CD8-positive, alpha-beta memory T cell (primary cell): ENCODE measurements at regions of chr12 and their contacts with region 1.

Region 1: DNA sequence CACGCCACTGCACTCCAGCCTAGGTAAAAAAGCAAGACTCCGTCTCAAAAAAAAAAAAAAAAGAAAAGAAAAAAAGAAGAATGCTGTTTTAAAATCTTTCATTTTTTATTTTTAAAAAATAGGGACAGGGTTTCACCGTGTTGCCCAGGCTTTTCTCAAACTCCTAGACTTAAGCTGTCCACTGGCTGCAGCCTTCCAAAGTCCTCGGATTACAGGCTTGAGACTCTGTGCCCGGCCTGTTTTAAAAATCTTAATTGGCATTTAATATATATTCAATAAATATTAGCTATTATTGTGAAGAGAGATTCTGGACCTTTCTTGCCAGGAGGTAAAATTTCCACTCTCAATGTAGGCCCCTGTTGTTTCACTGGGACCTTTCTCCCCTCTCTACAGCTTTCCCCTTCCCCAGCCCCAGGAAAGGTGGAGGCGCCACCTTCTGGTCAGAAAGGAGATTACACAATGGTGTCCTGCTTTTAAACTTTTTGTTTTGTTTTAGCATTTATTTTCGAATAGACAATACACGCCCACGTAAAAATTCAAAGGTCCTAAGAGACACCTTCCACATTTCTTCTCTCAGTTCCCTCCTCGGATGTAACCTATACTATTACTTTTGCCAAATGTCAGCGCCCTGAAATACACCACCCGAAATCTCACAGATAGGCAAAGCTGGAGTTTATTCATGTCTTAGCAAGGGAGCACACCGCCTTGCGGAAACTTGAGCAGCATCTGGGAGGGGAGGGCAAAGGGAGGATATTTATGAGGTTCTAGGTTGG is 23.8 kb upstream of the PHC1 start:
- DNase-seq: peak; percentile 31 to 68 (median 50)
- H3K4me3 ChIP-seq: peak overlapping the region; percentile 69
- H3K4me3 Mint-ChIP-seq: peak overlapping the region; percentile 84 to 97 (median 93)
- H3K27ac ChIP-seq: no peak overlapping the region
- H3K27ac Mint-ChIP-seq: peak overlapping the region in 7 of 8 donors; percentile 57 to 94 (median 86)
- H3K4me1 ChIP-seq: no peaks in the 10 kb centered on the region
- H3K4me1 Mint-ChIP-seq: peaks cover 4 to 7% (median 6%) of the 10 kb centered on the region in 3 donors
- H3K27me3 ChIP-seq: no peaks in the 10 kb centered on the region
- H3K27me3 Mint-ChIP-seq: peaks cover 1 to 6% of the 10 kb centered on the region in 2 donors

Region 2: GRCh38 chr12:7970475-7971252 is 919.8 kb before region 1 on chr12:
- CTCF ChIA-PET with region 1: no interaction called
- POLR2A ChIA-PET with region 1: no interaction called
- DNase-seq: peak; percentile 73 to 89 (median 82)
- H3K4me3 ChIP-seq: peak overlapping the region; percentile 78
- H3K4me3 Mint-ChIP-seq: peak overlapping the region; percentile 83 to 94 (median 85)
- H3K27ac ChIP-seq: peak overlapping the region; percentile 90
- H3K27ac Mint-ChIP-seq: peak overlapping the region; percentile 92 to 100 (median 96)
- H3K4me1 ChIP-seq: peaks cover 19% of the 10 kb centered on the region
- H3K4me1 Mint-ChIP-seq: peaks cover 18 to 33% (median 28%) of the 10 kb centered on the region in 3 donors
- H3K27me3 ChIP-seq: no peaks in the 10 kb centered on the region
- H3K27me3 Mint-ChIP-seq: peaks cover 0 to 5% of the 10 kb centered on the region in 2 donors

Region 3: DNA sequence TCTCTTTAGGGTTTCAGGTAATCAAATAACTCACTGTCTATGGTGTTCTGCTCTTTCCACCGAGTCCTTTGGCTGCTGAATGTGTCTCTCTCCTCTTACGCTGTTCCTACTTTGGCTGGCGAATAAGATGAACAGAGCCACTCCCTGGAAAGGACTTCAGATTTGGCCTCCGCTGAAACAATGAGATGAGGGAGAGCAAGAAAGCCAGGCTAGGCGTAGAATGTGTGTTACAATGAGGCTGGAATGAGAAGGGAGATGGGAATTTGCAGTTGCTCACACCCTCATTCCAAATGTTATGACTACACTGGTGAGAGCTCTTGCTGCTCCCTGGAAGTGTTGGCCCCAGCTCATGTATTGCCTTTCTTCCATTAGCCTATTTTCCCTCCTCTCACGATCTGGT is 227.9 kb before region 1 on chr12 and contains the start of gene MFAP5:
- CTCF ChIA-PET with region 1: interaction called, 12 read pairs
- POLR2A ChIA-PET with region 1: no interaction called
- DNase-seq: no peak
- H3K4me3 ChIP-seq: no peak within 1 kb of the TSS
- H3K4me3 Mint-ChIP-seq: no peak within 1 kb of the TSS
- H3K27ac ChIP-seq: no peak within 1 kb of the TSS
- H3K27ac Mint-ChIP-seq: no peak within 1 kb of the TSS
- H3K4me1 ChIP-seq: no peaks in the 10 kb centered on the region
- H3K4me1 Mint-ChIP-seq: no peaks in the 10 kb centered on the region
- H3K27me3 ChIP-seq: no peaks in the 10 kb centered on the region
- H3K27me3 Mint-ChIP-seq: peaks cover 8 to 10% of the 10 kb centered on the region in 2 donors
- total RNA-seq, gene MFAP5: not detected

Region 4: DNA sequence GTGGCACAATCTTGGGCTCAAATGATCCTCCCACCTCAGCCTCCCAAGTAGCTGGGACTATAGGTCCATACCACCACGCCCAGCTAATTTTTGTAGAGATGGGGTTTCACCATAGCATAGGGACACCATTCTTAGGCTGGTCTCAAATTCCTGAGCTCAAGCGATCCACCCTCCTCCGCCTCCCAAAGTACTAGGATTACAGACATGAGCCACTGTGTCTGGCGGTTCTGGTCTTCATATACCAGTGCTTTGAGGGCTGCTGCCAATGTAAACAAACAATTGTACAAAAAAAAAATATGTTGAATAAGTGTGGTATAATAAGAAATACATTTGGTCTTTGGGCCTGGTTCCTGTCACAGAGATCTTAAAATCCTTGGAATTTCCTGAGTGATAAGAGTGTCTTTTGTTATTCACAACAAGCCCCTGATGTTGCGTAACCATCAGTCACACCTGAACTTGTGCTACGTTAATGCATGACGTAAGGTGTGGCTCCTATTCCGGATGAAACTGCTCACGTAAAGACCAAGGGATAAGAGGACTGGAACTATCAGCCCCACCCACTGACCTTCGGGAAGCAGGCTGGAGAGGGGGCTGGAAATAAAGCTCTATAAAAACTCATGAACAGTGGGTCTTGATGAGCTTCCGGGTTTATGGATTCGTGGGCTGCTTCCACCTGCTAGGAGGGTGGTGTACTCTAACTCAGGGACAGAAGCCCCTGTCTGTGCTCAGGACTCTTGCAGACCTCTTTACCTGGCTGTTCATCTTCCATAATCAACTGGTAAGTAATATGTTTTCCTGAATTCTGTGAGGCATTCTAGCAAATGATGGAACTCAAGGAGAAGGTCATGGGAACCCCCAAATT is 209.2 kb before region 1 on chr12:
- CTCF ChIA-PET with region 1: interaction called, 38 read pairs
- POLR2A ChIA-PET with region 1: no interaction called
- DNase-seq: no peak
- H3K4me3 ChIP-seq: no peak overlapping the region
- H3K4me3 Mint-ChIP-seq: no peak overlapping the region
- H3K27ac ChIP-seq: no peak overlapping the region
- H3K27ac Mint-ChIP-seq: peak overlapping the region in 1 of 8 donors; percentile 10
- H3K4me1 ChIP-seq: no peaks in the 10 kb centered on the region
- H3K4me1 Mint-ChIP-seq: peaks cover 6 to 7% (median 7%) of the 10 kb centered on the region in 3 donors
- H3K27me3 ChIP-seq: no peaks in the 10 kb centered on the region
- H3K27me3 Mint-ChIP-seq: peaks cover 3 to 4% of the 10 kb centered on the region in 2 donors

Region 5: DNA sequence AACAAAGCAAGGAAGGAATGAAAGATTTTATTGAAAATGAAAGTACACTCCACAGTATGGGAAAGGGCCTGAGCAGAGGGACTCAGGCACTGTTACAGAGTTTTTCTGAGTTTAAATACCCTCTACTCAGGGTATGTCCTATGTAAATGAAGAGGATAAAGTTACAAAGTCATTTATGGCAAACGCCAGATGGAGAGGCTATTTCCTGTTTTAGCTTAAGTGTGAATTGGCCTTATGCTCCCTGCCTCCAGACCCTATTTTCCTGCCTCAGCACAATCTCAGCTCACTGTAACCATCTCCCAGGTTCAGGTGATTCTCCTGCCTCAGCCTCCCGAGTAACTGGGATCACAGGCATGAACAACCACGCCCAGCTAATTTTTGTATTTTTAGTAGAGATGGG is 17.0 kb after region 1 on chr12:
- CTCF ChIA-PET with region 1: interaction called, 12 read pairs
- POLR2A ChIA-PET with region 1: no interaction called
- DNase-seq: no peak
- H3K4me3 ChIP-seq: no peak overlapping the region
- H3K4me3 Mint-ChIP-seq: no peak overlapping the region
- H3K27ac ChIP-seq: no peak overlapping the region
- H3K27ac Mint-ChIP-seq: no peak overlapping the region
- H3K4me1 ChIP-seq: no peaks in the 10 kb centered on the region
- H3K4me1 Mint-ChIP-seq: no peaks in the 10 kb centered on the region
- H3K27me3 ChIP-seq: no peaks in the 10 kb centered on the region
- H3K27me3 Mint-ChIP-seq: peaks cover 2 to 6% of the 10 kb centered on the region in 2 donors

Region 6: DNA sequence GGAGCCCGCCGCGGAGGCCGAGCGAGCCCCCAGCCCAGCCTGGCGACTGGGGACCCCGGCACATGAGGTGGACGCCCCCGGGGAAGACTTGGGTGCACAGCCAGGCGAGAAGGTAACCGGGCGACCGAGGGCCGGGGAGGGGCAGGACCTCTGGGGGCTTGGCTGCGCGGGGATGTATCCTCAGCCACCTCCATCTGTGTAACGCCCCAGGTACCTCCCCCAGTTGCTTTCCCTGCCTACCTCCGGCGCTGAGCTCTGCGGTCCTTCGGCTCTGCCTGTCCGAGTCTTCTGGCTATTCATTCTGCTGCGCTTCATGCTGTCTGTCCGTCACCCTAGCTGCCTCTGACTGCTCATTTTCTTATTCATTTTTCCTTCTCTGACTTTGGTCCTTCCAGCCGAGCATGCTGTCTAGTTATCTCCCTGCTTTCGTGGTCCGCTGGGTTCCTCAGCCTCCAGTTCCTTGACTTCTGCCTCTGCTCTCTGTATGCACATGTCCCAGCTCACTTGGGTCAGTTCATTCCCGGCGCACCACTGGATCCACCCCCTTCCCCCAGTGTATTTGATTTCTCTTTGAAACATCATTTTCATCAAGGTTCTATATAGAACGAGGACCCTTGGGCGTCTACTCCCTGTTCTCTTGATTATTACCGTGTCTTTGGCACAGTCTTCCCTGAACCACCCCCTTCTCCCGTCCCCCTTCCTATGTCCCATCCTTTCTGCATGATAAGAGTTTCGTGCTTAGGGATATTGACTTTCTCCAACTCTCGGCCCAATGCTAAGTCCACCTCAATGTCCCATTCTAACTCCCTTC is 24.4 kb after region 1 on chr12:
- CTCF ChIA-PET with region 1: interaction called, 12 read pairs
- POLR2A ChIA-PET with region 1: no interaction called
- DNase-seq: peak; percentile 50 to 77 (median 66)
- H3K4me3 ChIP-seq: peak overlapping the region; percentile 90
- H3K4me3 Mint-ChIP-seq: no peak overlapping the region
- H3K27ac ChIP-seq: peak overlapping the region; percentile 34
- H3K27ac Mint-ChIP-seq: no peak overlapping the region
- H3K4me1 ChIP-seq: peaks cover 28% of the 10 kb centered on the region
- H3K4me1 Mint-ChIP-seq: peaks cover 7 to 20% (median 14%) of the 10 kb centered on the region in 3 donors
- H3K27me3 ChIP-seq: no peaks in the 10 kb centered on the region
- H3K27me3 Mint-ChIP-seq: no peaks in the 10 kb centered on the region

Region 7: DNA sequence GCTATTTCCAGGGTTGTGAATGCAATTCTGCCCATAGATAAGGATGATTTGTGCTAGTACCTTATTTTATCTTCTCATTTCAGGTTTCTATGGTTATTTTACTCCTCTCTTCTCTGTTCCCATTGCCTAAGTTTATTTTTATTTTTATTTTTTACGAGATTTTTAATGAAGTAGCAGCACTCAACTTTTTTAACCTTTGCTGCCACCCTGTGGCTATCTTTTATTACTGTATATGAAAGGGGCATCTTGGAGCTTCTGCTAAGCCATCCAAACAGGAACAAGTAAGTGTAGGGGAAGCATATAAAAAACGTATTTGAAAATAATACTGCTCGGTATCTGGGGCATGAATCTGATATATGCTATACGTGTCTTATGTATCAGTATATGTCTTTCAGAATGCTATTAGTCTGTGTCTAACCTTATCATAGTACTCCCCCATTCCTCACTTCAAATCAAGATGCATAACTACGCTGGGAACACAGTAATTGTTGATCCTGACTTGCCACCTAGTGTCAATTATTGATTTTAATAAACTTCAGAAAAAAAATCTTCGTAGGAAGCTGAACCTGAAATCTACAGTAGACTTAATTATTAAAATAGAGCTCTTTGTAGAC is 159.1 kb after region 1 on chr12:
- CTCF ChIA-PET with region 1: interaction called, 14 read pairs
- POLR2A ChIA-PET with region 1: no interaction called
- DNase-seq: peak in 2 of 5 donors; percentile 44 to 48
- H3K4me3 ChIP-seq: no peak overlapping the region
- H3K4me3 Mint-ChIP-seq: peak overlapping the region in 2 of 7 donors; percentile 24 to 74
- H3K27ac ChIP-seq: no peak overlapping the region
- H3K27ac Mint-ChIP-seq: peak overlapping the region in 7 of 8 donors; percentile 50 to 93 (median 82)
- H3K4me1 ChIP-seq: peaks cover 17% of the 10 kb centered on the region
- H3K4me1 Mint-ChIP-seq: peaks cover 39 to 60% (median 39%) of the 10 kb centered on the region in 3 donors
- H3K27me3 ChIP-seq: no peaks in the 10 kb centered on the region
- H3K27me3 Mint-ChIP-seq: peaks cover 0 to 2% of the 10 kb centered on the region in 2 donors